ENCODE measurements at regions of chr19 and their contacts with region 1.

Region 1: GRCh38 chr19:58362272-58362994 is at the start of gene ZNF497:
- DNase-seq: peak; percentile 94
- ATAC-seq: peak; percentile 91
- H3K4me3 ChIP-seq: peak within 1 kb of the TSS; percentile 81 to 90
- H3K27ac ChIP-seq: peak within 1 kb of the TSS; percentile 100
- H3K4me1 ChIP-seq: peaks cover 6 to 19% of the 10 kb centered on the region in 2 experiments; a peak in 3 of 4 replicates
- H3K27me3 ChIP-seq: no peaks in the 10 kb centered on the region
- CTCF ChIP-seq: no peak
- POLR2A ChIP-seq: peak; percentile 84
- RAD21 ChIP-seq: no peak
- total RNA-seq, gene ZNF497: 5.1 TPM

Region 2: GRCh38 chr19:57978586-57979289 is 383.7 kb before region 1 on chr19:
- CTCF ChIA-PET with region 1: no interaction called
- POLR2A ChIA-PET with region 1: no interaction called
- RAD21 ChIA-PET with region 1: no interaction called
- intact Hi-C with region 1: no loop called
- DNase-seq: no peak
- ATAC-seq: no peak
- H3K4me3 ChIP-seq: no peak overlapping the region
- H3K27ac ChIP-seq: no peak overlapping the region
- H3K4me1 ChIP-seq: no peaks in the 10 kb centered on the region
- H3K27me3 ChIP-seq: no peaks in the 10 kb centered on the region
- CTCF ChIP-seq: no peak
- POLR2A ChIP-seq: no peak
- RAD21 ChIP-seq: no peak

Region 3: DNA sequence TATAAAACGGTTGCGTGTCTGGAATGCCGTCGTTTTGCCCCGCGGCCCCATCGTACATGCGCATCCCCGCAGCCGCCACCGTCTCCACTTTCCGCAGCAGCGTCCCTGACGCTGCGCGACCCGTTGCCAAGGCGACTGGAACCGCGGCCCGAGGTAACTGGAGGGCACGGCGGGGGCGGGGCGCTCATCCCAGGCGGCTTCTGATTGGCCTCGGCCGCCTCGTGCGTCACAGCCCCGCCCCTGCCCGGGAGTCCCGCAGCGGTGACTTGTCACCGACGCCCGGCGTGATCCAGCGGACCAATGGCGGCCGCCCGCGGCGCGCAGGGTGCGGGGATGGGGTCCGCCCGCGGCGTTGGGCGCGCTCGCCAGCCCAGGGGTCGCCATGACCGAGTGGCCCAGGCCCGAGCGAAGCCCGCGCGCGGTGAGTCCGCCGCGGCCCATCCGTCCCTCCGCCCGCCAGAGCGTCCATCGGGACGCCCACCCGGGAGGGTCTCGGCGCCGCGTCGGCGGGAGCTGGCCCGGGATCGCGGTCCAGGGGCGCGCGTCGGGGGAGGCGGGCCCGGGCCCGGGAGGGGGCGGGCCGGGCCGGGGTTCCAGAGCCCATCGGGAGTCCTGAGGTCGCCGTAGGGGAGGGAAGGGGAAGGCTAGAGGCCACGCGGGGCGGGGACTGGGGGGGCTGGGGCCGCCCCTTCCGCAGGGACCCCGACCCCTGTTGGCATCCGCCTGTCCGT is 328.5 kb before region 1 on chr19 and contains the start of gene ZSCAN1:
- CTCF ChIA-PET with region 1: no interaction called
- POLR2A ChIA-PET with region 1: no interaction called
- RAD21 ChIA-PET with region 1: no interaction called
- intact Hi-C with region 1: no loop called
- DNase-seq: no peak
- ATAC-seq: no peak
- H3K4me3 ChIP-seq: no peak within 1 kb of the TSS
- H3K27ac ChIP-seq: no peak within 1 kb of the TSS
- H3K4me1 ChIP-seq: no peaks in the 10 kb centered on the region
- H3K27me3 ChIP-seq: no peaks in the 10 kb centered on the region
- CTCF ChIP-seq: no peak
- POLR2A ChIP-seq: no peak
- RAD21 ChIP-seq: no peak
- total RNA-seq, gene ZSCAN1: not detected

Region 4: GRCh38 chr19:58243351-58243750 is 119.1 kb before region 1 on chr19:
- CTCF ChIA-PET with region 1: no interaction called
- POLR2A ChIA-PET with region 1: no interaction called
- RAD21 ChIA-PET with region 1: no interaction called
- intact Hi-C with region 1: no loop called
- DNase-seq: no peak
- ATAC-seq: no peak; the same call in 1 of the 2 replicates
- H3K4me3 ChIP-seq: no peak overlapping the region
- H3K27ac ChIP-seq: no peak overlapping the region
- H3K4me1 ChIP-seq: no peaks in the 10 kb centered on the region
- H3K27me3 ChIP-seq: no peaks in the 10 kb centered on the region
- CTCF ChIP-seq: no peak
- POLR2A ChIP-seq: no peak
- RAD21 ChIP-seq: no peak

Region 5: DNA sequence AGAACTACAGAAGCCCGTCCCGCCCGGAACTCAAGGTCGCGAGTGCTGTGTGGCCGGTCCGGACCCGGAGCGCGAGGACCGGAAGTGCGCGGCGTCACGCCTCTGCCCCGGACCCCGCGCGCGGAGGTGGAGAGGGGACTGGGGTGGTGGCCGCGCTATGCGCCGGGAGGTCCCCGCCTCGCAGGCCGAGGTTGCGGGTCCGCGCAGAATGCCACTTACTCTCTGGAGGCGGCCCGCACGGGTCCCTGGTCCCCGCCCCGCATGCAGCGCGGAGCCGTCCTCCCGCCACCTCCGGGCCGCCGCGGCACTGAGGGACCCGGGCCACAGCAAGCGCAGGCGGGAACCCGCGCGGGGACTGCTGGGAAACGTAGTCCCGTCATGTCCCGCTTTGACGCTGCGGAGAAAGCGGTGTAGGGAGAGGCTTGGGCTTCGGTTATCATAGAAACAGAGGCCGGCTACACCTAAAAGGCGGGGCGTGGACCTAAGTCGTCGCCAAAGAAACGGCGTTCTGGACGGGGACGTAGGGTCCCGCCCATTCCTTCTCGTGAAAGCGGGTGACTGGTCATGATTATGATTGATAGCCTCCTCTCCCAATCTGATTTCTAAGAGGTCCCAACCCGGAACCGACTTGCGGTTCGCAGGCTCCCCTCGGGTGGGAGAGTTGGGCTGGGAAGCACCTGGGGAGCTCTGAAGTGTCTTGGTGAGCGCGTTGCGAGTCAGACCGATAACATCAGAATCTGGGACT is 18.5 kb after region 1 on chr19 and contains the start of gene ZNF837:
- CTCF ChIA-PET with region 1: no interaction called
- POLR2A ChIA-PET with region 1: interaction called, 7 read pairs
- RAD21 ChIA-PET with region 1: no interaction called
- intact Hi-C with region 1: loop called (anchors 1 kb)
- DNase-seq: peak; percentile 100
- ATAC-seq: peak; percentile 87
- H3K4me3 ChIP-seq: peak within 1 kb of the TSS; percentile 59 to 92
- H3K27ac ChIP-seq: peak within 1 kb of the TSS; percentile 92
- H3K4me1 ChIP-seq: peaks cover 20 to 37% of the 10 kb centered on the region in 2 experiments
- H3K27me3 ChIP-seq: no peaks in the 10 kb centered on the region
- CTCF ChIP-seq: no peak
- POLR2A ChIP-seq: peak; percentile 44
- RAD21 ChIP-seq: no peak; the same call in 1 of the 2 replicates
- total RNA-seq, gene ZNF837: 3.2 TPM

Region 6: GRCh38 chr19:58429745-58430144 is 67.3 kb after region 1 on chr19:
- CTCF ChIA-PET with region 1: no interaction called
- POLR2A ChIA-PET with region 1: no interaction called
- RAD21 ChIA-PET with region 1: no interaction called
- intact Hi-C with region 1: no loop called
- DNase-seq: no peak
- ATAC-seq: no peak
- H3K4me3 ChIP-seq: no peak overlapping the region
- H3K27ac ChIP-seq: no peak overlapping the region
- H3K4me1 ChIP-seq: no peaks in the 10 kb centered on the region
- H3K27me3 ChIP-seq: no peaks in the 10 kb centered on the region
- CTCF ChIP-seq: no peak
- POLR2A ChIP-seq: no peak
- RAD21 ChIP-seq: no peak

Measured in HCT116 (cell line).